ENCODE measurements at regions of chrX and their contacts with region 1.

Region 1: DNA sequence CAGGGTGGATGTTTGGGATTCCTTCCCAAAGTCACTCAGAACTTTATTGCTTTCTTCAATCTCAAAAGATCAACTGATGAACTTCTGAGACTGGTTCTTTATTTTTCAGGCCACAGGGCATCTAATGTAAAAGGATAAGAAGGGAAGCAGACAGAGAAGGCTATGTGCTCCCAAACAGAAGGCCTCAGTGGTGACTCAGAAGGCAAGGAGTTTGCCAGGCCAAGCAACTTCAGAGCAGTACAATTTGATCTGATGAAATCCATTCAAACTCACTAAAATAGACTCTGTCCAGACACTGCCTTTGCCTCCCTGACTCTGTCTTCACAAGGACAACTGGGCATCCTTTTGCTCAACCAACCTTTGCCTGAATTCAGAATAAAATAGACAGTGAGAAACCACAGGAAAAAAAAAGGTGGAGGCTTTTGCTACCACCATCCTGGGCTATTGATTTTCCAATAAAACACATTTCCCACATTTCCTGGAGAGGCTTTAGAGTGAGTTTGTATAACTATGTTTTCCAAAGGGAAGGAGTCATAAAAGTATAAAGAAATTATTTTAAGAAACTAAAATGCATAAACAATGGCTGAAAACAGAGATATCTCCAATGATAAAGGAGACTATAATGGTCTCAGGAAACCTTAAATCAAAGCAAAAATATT is 55.2 kb downstream of the ARHGEF6 start:
- DNase-seq: no peak
- H3K4me3 Mint-ChIP-seq: no peak overlapping the region
- H3K27ac Mint-ChIP-seq: no peak overlapping the region
- H3K4me1 Mint-ChIP-seq: peaks cover 44% of the 10 kb centered on the region
- H3K27me3 Mint-ChIP-seq: no peaks in the 10 kb centered on the region

Region 2: GRCh38 chrX:135890087-135890585 is 835.4 kb before region 1 on chrX:
- CTCF ChIA-PET with region 1: no interaction called
- intact Hi-C with region 1: no loop called
- DNase-seq: no peak
- H3K4me3 Mint-ChIP-seq: no peak overlapping the region
- H3K27ac Mint-ChIP-seq: no peak overlapping the region
- H3K4me1 Mint-ChIP-seq: no peaks in the 10 kb centered on the region
- H3K27me3 Mint-ChIP-seq: no peaks in the 10 kb centered on the region

Region 3: DNA sequence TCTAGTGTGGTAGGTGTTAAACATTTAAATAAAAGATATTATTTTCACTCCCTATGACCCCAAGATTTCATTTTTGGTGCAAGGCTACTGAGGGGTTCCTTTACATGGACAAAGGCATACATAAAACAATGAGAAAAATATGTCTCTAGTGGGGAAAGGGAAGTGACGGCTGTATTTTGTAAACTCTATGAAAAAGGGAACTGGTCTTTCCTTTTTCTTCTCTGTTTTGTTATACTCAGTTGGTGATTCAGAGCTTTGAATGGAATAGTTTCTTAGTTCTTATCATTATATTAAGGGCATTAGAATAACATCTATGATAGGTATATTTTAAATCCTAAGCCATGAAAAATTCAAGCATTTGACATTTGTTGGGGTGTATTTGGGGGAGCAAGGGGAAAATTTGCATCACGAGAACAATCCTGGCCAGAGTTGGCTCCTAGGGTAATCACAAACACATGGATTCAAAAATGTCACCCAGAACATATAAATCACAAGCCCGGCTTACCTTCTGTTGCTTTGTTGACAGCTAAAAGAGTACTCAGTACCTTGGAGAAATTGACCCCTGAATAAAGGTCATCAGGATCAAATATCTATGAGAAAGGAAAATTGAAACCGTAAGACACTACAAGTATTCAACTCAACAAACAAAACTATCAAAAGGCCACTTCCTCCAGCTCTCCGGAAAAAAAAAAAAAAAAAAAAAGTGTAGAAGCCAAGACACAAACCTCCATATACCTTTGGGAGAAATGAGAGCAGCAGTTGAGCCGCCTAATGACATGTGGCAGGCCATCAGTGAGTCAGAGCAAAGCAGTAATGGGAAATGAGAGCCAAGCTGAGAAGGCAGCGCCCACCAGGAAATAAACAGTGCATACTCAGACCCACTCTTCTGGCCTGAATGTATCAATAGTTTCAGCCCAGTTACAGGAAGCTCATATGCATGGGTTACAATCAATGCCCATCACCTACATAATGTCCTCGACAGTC is 21.7 kb after region 1 on chrX:
- CTCF ChIA-PET with region 1: interaction called, 5 read pairs
- intact Hi-C with region 1: loop called (anchors 1 kb)
- DNase-seq: peak; percentile 62
- H3K4me3 Mint-ChIP-seq: peak overlapping the region; percentile 46
- H3K27ac Mint-ChIP-seq: peak overlapping the region; percentile 91
- H3K4me1 Mint-ChIP-seq: peaks cover 90% of the 10 kb centered on the region
- H3K27me3 Mint-ChIP-seq: no peaks in the 10 kb centered on the region

Measured in activated naive CD4-positive, alpha-beta T cell treated with anti-CD3 and anti-CD28 coated beads for 36 hours (primary cell).